ENCODE measurements at regions of chr3 and their contacts with region 1.

Region 1: DNA sequence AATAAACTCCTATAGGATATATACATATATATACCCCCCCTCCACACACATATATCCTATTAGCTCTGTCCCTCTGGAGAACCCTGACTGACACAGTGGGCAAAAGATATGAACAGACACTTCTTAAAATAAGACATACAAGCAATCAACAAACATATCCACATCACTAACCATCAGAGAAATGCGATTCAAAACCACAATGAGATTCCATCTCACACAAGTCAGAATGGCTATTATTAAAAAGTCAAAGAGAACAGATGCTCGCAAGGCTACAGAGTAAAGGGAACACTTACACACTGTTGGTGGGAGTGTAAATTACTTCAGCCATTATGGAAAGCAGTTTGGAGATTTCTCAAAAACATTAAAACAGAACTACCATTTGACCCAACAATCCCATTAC is 46.2 kb upstream of the ARHGEF26 start:
- DNase-seq: no peak
- H3K4me3 ChIP-seq: no peak overlapping the region
- H3K27ac ChIP-seq: no peak overlapping the region
- H3K4me1 ChIP-seq: no peaks in the 10 kb centered on the region
- H3K27me3 ChIP-seq: no peaks in the 10 kb centered on the region
- CTCF ChIP-seq: no peak

Region 2: DNA sequence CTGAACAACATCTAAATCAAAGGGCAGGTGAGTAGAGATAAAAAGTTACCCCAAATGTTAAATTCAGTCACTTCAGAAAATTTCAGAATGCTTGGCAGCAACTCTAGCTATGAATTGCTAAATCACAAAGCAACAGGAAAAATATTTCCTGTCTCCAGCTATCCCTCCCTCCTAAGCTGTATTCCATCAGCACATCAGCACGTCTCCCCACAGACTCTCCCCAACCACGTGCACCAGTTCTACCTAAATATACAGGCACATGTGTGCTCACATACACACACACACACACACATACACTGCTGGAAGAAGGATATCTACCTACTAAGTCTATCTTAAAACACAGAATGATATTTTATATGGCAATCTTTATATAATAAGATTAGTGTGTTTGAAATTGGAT is 130.9 kb before region 1 on chr3:
- CTCF ChIA-PET with region 1: no interaction called
- POLR2A ChIA-PET with region 1: no interaction called
- intact Hi-C with region 1: no loop called
- DNase-seq: no peak
- H3K4me3 ChIP-seq: no peak overlapping the region
- H3K27ac ChIP-seq: no peak overlapping the region
- H3K4me1 ChIP-seq: no peaks in the 10 kb centered on the region
- H3K27me3 ChIP-seq: no peaks in the 10 kb centered on the region
- CTCF ChIP-seq: no peak

Region 3: DNA sequence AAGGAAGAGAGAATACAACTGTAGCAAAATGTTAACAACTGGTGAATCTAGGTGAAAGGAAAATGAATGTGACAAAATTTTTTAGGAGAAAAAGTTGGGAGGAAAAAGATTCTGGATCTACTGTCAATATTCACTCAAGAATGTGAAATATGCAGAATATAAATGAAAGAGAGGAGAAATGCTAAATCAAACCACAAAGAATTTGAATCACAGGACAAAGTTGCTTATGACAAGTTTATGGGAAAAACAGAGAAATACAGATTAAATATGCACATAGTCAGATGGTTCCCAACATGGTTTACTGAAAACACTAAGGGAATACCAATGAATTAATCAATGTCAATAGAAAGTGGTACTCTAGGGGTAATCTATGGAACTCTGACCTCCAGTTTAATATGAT is 1703.5 kb after region 1 on chr3:
- CTCF ChIA-PET with region 1: interaction called, 10 read pairs
- POLR2A ChIA-PET with region 1: no interaction called
- intact Hi-C with region 1: no loop called
- DNase-seq: no peak
- H3K4me3 ChIP-seq: no peak overlapping the region
- H3K27ac ChIP-seq: no peak overlapping the region
- H3K4me1 ChIP-seq: no peaks in the 10 kb centered on the region
- H3K27me3 ChIP-seq: no peaks in the 10 kb centered on the region
- CTCF ChIP-seq: no peak